Calu3 (cell line): ENCODE measurements at regions of chr20 and their contacts with region 1.

Region 1: DNA sequence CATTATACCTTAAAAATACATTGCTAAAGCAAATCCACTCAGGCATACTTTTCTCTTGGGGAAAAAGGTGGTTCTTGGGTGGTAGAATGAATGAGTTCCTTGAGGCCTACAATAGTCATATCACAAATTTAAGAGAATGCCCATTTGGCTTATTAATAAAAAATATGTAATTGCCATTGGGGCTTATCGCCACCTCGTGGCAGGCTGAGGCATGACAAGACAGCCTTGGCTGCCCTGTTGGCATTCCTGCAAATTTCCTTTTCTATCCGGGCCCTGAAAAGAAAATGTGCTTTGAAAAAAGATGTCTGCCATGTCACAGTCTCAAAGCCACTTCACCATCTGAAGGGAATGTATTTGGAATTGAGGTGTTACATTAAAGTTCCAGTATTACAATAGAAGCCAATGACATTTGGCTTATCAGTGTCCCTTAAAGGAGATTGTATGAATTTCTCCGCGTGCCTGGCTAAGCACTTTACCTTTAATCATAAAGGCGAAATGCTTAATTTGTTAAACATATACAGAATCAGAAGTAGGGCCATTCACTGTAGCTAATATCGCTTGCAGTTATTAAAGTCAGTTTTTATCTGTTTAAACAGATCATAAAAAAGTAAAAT is 188.3 kb upstream of the ZFP64 start:
- DNase-seq: peak; percentile 76
- H3K4me3 Mint-ChIP-seq: no peak overlapping the region
- H3K27ac Mint-ChIP-seq: no peak overlapping the region
- H3K4me1 Mint-ChIP-seq: no peaks in the 10 kb centered on the region
- H3K27me3 Mint-ChIP-seq: peaks cover 56% of the 10 kb centered on the region
- CTCF ChIP-seq: peak; percentile 97

Region 2: GRCh38 chr20:52031563-52032303 is 348.1 kb before region 1 on chr20:
- CTCF ChIA-PET with region 1: no interaction called
- intact Hi-C with region 1: no loop called
- DNase-seq: no peak
- H3K4me3 Mint-ChIP-seq: no peak overlapping the region
- H3K27ac Mint-ChIP-seq: no peak overlapping the region
- H3K4me1 Mint-ChIP-seq: no peaks in the 10 kb centered on the region
- H3K27me3 Mint-ChIP-seq: no peaks in the 10 kb centered on the region
- CTCF ChIP-seq: no peak

Region 3: DNA sequence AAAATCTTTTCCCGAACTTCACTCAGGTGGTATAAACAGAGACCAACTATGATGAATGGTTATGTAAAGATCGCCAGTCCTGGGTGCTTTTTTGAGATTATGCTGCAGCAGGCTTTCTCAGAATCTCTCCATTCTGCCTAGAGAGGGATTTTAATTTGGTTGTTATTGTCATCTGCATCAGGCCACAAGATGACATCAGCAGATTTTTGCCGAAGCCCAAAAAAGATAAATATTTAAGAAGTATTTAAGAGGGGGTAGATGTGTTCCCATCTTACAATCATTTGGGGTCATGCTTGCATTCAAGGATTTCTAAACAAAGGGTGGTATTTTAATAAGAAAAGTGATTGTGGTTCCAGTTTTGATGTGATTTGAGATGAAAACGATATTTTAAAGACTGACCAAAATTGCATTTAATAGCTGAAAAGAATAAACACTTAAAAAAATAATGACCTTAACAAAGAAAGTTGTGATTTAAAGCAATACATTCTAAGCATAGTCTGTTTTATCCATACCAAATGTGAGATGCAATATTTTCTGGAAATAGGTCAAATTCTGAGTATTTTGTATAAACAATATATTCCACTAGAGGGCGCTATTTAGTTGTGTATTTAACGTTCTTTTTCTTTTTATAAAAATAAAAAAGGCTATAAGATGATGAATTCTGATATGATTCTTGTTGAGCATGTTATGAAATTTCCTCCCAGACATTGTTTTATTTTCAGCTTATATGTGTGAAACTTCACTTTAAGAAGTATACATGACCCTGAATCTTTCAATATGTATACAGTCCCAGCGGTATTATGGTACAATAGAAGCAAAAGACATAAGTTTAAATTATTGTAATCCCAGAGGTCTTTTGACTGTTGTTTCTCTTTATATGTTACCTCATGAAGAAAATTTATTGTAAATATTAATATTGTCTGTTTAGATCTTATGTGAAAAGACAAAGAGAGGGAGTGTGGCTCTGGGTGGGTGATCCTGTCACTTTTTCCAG is 137.3 kb before region 1 on chr20:
- CTCF ChIA-PET with region 1: interaction called, 3 read pairs
- intact Hi-C with region 1: loop called (anchors 1 kb)
- DNase-seq: no peak
- H3K4me3 Mint-ChIP-seq: no peak overlapping the region
- H3K27ac Mint-ChIP-seq: no peak overlapping the region
- H3K4me1 Mint-ChIP-seq: no peaks in the 10 kb centered on the region
- H3K27me3 Mint-ChIP-seq: no peaks in the 10 kb centered on the region
- CTCF ChIP-seq: peak; percentile 73

Region 4: GRCh38 chr20:52312132-52312729 is 67.6 kb before region 1 on chr20:
- CTCF ChIA-PET with region 1: interaction called, 3 read pairs
- intact Hi-C with region 1: loop called (anchors 1 kb)
- DNase-seq: peak; percentile 67
- H3K4me3 Mint-ChIP-seq: no peak overlapping the region
- H3K27ac Mint-ChIP-seq: no peak overlapping the region
- H3K4me1 Mint-ChIP-seq: no peaks in the 10 kb centered on the region
- H3K27me3 Mint-ChIP-seq: peaks cover 74% of the 10 kb centered on the region
- CTCF ChIP-seq: peak; percentile 67